ENCODE measurements at regions of chr13 and their contacts with region 1.

Region 1: GRCh38 chr13:79936368-79937136 is 404.4 kb downstream of the SPRY2 start:
- DNase-seq: peak; percentile 16 to 91
- H3K4me3 ChIP-seq: no peak overlapping the region
- H3K27ac ChIP-seq: peak overlapping the region; percentile 87 to 97
- H3K4me1 ChIP-seq: peaks cover 0 to 16% of the 10 kb centered on the region in 2 donors
- H3K27me3 ChIP-seq: no peaks in the 10 kb centered on the region
- CTCF ChIP-seq: no peak

Region 2: GRCh38 chr13:79593641-79594275 is 342.8 kb before region 1 on chr13:
- intact Hi-C with region 1: no loop called
- DNase-seq: no peak
- H3K4me3 ChIP-seq: no peak overlapping the region
- H3K27ac ChIP-seq: no peak overlapping the region
- H3K4me1 ChIP-seq: no peaks in the 10 kb centered on the region
- H3K27me3 ChIP-seq: no peaks in the 10 kb centered on the region
- CTCF ChIP-seq: no peak

Region 3: GRCh38 chr13:79775830-79776229 is 160.7 kb before region 1 on chr13:
- intact Hi-C with region 1: loop called (anchors 10 kb)
- DNase-seq: no peak
- H3K4me3 ChIP-seq: no peak overlapping the region
- H3K27ac ChIP-seq: no peak overlapping the region
- H3K4me1 ChIP-seq: peaks cover 0 to 7% of the 10 kb centered on the region in 2 donors
- H3K27me3 ChIP-seq: no peaks in the 10 kb centered on the region
- CTCF ChIP-seq: peak; percentile 22 to 69 (median 51)

Region 4: GRCh38 chr13:80048802-80049201 is 112.2 kb after region 1 on chr13:
- intact Hi-C with region 1: loop called (anchors 5 kb)
- DNase-seq: peak; percentile 90 to 96
- H3K4me3 ChIP-seq: peak overlapping the region in 1 of 2 donors; percentile 28
- H3K27ac ChIP-seq: peak overlapping the region; percentile 54 to 70
- H3K4me1 ChIP-seq: peaks cover 7 to 16% of the 10 kb centered on the region in 2 donors
- H3K27me3 ChIP-seq: no peaks in the 10 kb centered on the region
- CTCF ChIP-seq: no peak

Region 5: GRCh38 chr13:80132741-80133601 is 196.4 kb after region 1 on chr13:
- intact Hi-C with region 1: loop called (anchors 2 kb)
- DNase-seq: peak in 1 of 2 donors; percentile 86
- H3K4me3 ChIP-seq: peak overlapping the region; percentile 29 to 57
- H3K27ac ChIP-seq: peak overlapping the region; percentile 81 to 88
- H3K4me1 ChIP-seq: peaks cover 12 to 26% of the 10 kb centered on the region in 2 donors
- H3K27me3 ChIP-seq: no peaks in the 10 kb centered on the region
- CTCF ChIP-seq: no peak

Region 6: DNA sequence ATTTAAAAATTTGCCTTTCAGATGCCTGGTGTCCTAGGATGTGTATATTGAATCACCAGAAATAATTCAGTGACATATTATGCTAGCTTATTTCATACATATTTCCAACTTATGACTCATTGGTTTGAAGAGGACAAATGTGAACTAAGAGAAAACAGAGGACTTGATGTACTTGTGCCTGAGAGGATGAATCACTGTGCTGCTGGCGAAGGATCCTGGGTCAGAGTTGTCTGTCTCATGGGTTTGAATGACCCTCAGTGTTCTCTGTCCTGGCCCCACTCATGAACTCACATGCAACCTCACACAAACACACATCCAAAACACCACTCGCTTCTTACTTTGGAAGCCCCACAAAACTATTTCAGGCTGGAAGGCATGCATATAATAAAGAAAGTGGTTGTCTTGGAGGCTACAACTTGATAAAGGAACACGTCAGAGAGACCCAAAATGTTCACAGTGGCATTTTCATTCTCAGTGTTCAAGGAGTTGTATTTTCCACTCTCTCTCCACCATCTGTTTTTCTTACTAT is 533.4 kb after region 1 on chr13:
- intact Hi-C with region 1: loop called (anchors 5 kb)
- DNase-seq: peak; percentile 62 to 93
- H3K4me3 ChIP-seq: peak overlapping the region in 1 of 2 donors; percentile 14
- H3K27ac ChIP-seq: peak overlapping the region; percentile 85 to 91
- H3K4me1 ChIP-seq: peaks cover 11 to 24% of the 10 kb centered on the region in 2 donors
- H3K27me3 ChIP-seq: no peaks in the 10 kb centered on the region
- CTCF ChIP-seq: no peak

Measured in ascending aorta (tissue), 2 donors.